Calu3 (cell line): ENCODE measurements at regions of chr17 and their contacts with region 1.

Region 1: DNA sequence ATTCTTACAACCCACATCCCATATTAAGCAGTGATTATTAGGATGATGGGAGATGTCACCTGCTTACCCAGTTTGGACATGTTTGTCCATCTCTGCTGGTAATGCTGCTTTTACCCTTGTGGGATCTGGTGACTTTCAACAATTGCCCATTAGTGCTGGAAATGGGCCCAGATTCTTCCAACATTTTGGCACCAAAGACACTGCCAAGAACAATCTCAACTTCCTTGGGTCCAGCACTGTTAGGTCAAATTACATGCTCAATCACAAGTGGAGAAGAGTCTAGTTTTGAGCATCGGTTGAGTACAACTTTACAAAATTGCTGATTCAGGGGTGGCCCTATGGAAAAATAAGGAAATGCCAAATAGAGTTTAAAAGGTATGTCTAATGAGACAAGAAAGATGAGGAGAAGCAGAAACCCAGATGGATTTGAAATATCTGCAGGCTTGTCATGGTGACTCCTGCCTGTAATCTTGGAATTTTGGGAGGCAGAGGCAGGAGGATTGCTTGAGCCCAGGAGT is 13.0 kb upstream of the ZFP3 start:
- DNase-seq: no peak
- H3K4me3 Mint-ChIP-seq: no peak overlapping the region
- H3K27ac Mint-ChIP-seq: no peak overlapping the region
- H3K4me1 Mint-ChIP-seq: no peaks in the 10 kb centered on the region
- H3K27me3 Mint-ChIP-seq: no peaks in the 10 kb centered on the region
- CTCF ChIP-seq: no peak

Region 2: GRCh38 chr17:4908301-4908700 is 157.0 kb before region 1 on chr17:
- CTCF ChIA-PET with region 1: interaction called, 3 read pairs
- intact Hi-C with region 1: loop called (anchors 1 kb)
- DNase-seq: no peak
- H3K4me3 Mint-ChIP-seq: no peak overlapping the region
- H3K27ac Mint-ChIP-seq: no peak overlapping the region
- H3K4me1 Mint-ChIP-seq: peaks cover 5% of the 10 kb centered on the region
- H3K27me3 Mint-ChIP-seq: no peaks in the 10 kb centered on the region
- CTCF ChIP-seq: no peak

Region 3: GRCh38 chr17:5031365-5032082 is 33.8 kb before region 1 on chr17:
- CTCF ChIA-PET with region 1: interaction called, 9 read pairs
- intact Hi-C with region 1: loop called (anchors 1 kb)
- DNase-seq: peak; percentile 71
- H3K4me3 Mint-ChIP-seq: peak overlapping the region; percentile 54
- H3K27ac Mint-ChIP-seq: no peak overlapping the region
- H3K4me1 Mint-ChIP-seq: no peaks in the 10 kb centered on the region
- H3K27me3 Mint-ChIP-seq: no peaks in the 10 kb centered on the region
- CTCF ChIP-seq: peak; percentile 45